IMR-90 (cell line): ENCODE measurements at regions of chr16 and their contacts with region 1.

Region 1: GRCh38 chr16:10918294-10919002 is 23.8 kb downstream of the DEXI start:
- DNase-seq: peak; percentile 92
- ATAC-seq: peak; percentile 98
- H3K4me3 ChIP-seq: no peak overlapping the region
- H3K27ac ChIP-seq: no peak overlapping the region
- H3K4me1 ChIP-seq: peaks cover 5% of the 10 kb centered on the region
- H3K27me3 ChIP-seq: peaks cover 4% of the 10 kb centered on the region; the same call in 1 of the 2 replicates
- CTCF ChIP-seq: peak; percentile 94
- POLR2A ChIP-seq: 0 out of 2 replicates have a peak, but pooled peaks have one; percentile 25
- RAD21 ChIP-seq: peak; percentile 93

Region 2: DNA sequence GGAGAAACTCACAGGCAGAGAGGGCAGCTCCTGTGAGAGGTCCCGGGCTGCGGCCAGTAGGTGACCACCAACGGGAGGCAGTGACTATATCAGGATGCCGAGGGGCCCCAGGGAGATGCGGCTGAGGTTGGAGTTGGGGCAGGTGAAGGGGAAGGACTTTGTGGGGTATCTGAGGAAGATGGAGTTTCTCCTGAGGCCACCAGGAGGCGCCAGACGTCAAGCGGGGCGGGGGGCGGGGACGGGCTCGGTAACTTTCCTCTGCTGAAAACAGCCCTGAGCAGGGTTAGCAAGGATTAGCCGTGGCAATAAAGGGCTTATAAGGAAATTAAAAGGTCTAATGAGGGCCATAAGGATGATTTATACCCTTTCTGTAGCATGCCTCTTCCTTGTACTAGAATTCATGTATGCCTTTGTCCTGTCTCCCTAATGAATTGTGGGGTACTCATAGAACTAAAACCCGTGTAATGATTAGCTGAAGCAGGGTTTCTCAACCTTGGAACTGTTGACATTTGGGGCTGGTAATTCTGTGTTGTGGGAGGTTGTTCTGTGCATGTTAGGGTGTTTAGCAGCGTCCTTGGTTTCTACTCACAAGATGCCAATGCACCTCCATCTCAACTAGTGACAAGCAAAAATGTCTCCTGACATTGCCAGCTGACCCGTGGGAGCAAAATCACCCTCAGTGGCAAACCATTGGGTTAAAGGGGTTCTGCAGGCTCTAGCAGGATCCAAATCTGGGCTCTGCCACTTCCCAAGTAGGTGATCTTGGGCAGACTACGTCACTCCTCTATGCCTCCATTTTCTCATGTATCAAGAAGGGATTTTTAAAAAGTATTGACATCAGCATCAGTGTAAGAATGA is 661.4 kb before region 1 on chr16:
- CTCF ChIA-PET with region 1: no interaction called
- POLR2A ChIA-PET with region 1: no interaction called
- dilution Hi-C with region 1: no loop called
- in situ Hi-C with region 1: loop called (anchors 25 kb)
- intact Hi-C with region 1: no loop called
- DNase-seq: no peak
- ATAC-seq: peak; percentile 59
- H3K4me3 ChIP-seq: no peak overlapping the region
- H3K27ac ChIP-seq: no peak overlapping the region
- H3K4me1 ChIP-seq: no peaks in the 10 kb centered on the region
- H3K27me3 ChIP-seq: no peaks in the 10 kb centered on the region
- CTCF ChIP-seq: peak; percentile 63
- POLR2A ChIP-seq: no peak
- RAD21 ChIP-seq: peak; percentile 55

Region 3: DNA sequence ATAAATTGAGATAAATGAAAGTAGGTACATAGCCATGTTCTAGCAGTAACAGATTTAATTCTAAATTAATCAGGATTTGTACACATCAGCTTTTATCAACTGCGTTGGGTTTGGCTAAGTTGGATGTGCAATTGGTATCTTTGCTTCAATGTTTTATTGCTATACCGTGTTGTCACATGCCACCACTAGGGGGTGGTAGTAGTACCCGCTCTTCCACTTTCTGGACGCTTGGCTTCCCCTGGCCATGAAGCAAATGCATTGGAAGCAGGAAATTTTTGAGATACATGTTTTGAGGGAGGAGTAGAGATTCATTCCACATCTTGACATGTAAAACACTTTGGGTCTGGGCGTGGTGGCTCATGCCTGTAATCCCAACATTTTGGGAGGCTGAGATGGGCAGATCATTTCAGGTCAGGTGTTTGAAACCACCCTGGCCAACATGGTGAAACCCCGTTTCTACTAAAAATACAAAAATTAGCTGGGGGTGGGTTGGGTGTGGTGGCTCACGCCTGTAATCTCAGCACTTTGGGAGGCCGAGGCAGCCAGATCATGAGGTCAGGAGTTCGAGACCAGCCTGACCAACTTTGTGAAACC is 396.7 kb before region 1 on chr16:
- CTCF ChIA-PET with region 1: interaction called, 4 read pairs
- POLR2A ChIA-PET with region 1: no interaction called
- dilution Hi-C with region 1: no loop called
- in situ Hi-C with region 1: loop called (anchors 10 kb)
- intact Hi-C with region 1: loop called (anchors 1 kb)
- DNase-seq: peak; percentile 68
- ATAC-seq: peak; percentile 98
- H3K4me3 ChIP-seq: no peak overlapping the region
- H3K27ac ChIP-seq: no peak overlapping the region
- H3K4me1 ChIP-seq: no peaks in the 10 kb centered on the region
- H3K27me3 ChIP-seq: no peaks in the 10 kb centered on the region
- CTCF ChIP-seq: peak; percentile 88
- POLR2A ChIP-seq: no peak
- RAD21 ChIP-seq: peak; percentile 81

Region 4: DNA sequence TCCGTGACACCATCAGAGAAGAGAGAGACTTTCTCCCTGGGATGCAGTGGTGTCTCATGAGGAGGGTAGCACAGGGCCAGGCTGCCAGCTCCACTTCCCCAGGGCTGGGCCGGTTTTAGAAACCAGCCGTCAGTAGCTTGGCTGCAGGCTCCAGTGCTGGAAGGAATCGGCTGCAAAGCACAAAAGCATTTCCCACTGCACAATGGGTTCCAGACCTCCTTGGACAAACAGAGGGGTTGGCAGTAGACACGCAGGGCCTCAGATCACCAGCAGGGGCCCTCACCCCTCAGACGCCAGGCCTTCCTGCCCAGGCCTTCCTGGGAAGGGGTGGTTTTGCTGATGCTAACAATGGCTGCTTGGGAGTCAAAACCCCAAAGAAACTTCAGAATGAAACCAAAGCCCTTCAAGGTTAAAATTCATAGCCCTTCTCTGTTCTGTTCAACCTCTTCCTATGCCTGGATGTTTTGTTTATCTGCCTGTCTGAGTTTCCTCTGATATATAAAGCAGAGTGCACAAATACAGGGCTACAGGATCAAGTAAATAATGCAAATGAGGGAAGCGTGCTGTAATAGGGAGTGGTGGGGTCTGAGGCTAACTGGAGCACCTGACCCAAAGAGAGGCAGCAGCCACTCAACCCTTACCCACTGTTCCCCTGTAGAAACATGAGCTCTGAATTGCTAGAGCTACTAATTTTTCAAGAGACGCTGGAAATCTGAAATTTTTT is 250.0 kb before region 1 on chr16:
- CTCF ChIA-PET with region 1: no interaction called
- POLR2A ChIA-PET with region 1: no interaction called
- dilution Hi-C with region 1: no loop called
- in situ Hi-C with region 1: no loop called
- intact Hi-C with region 1: no loop called
- DNase-seq: peak; percentile 10
- ATAC-seq: peak; percentile 59
- H3K4me3 ChIP-seq: no peak overlapping the region
- H3K27ac ChIP-seq: no peak overlapping the region
- H3K4me1 ChIP-seq: no peaks in the 10 kb centered on the region
- H3K27me3 ChIP-seq: peaks cover 4% of the 10 kb centered on the region; the same call in 1 of the 2 replicates
- CTCF ChIP-seq: peak; percentile 35
- POLR2A ChIP-seq: no peak
- RAD21 ChIP-seq: no peak

Region 5: GRCh38 chr16:10737068-10737625 is 181.3 kb before region 1 on chr16:
- CTCF ChIA-PET with region 1: interaction called, 7 read pairs
- POLR2A ChIA-PET with region 1: no interaction called
- dilution Hi-C with region 1: no loop called
- in situ Hi-C with region 1: no loop called
- intact Hi-C with region 1: loop called (anchors 2 kb)
- DNase-seq: peak; percentile 61
- ATAC-seq: peak; percentile 89
- H3K4me3 ChIP-seq: no peak overlapping the region
- H3K27ac ChIP-seq: no peak overlapping the region
- H3K4me1 ChIP-seq: peaks cover 2% of the 10 kb centered on the region; the same call in 1 of the 2 replicates
- H3K27me3 ChIP-seq: no peaks in the 10 kb centered on the region
- CTCF ChIP-seq: peak; percentile 96
- POLR2A ChIP-seq: 0 out of 2 replicates have a peak, but pooled peaks have one; percentile 26
- RAD21 ChIP-seq: peak; percentile 96

Region 6: DNA sequence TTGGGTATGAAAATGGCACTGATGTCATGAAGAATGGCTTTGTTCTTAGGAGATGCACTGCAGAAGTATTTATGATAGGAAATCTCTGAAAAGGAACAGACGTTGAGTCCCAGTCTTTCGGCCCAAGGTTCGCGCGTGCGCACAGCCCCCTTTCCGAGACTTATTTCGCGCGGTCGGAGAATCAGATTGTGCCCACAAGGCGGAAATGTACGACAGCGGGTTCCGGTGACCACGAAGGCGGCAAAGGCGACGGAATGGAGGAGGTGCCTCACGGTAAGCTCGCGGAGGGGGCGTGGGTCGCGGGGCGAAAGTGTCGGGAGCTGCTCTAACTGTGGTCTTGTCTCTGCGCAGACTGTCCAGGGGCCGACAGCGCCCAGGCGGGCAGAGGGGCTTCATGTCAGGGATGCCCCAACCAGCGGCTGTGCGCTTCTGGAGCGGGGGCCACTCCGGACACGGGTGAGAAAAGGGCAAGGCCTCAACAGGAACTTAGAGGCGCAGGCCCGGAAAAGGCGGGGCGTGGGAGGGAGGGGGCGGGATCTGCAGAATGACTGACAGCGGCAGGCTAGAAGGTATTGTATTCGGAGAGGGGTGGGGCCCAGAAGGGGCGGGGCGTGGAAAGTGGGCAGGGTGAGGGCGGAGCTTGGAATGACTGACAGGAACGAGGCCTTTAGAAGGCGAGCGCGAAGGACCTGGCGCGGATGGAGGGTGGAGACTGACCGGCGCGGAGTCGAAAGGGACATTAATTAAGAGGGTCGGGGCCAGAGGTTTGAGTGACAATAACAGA is 174.6 kb before region 1 on chr16 and contains the start of gene NUBP1:
- CTCF ChIA-PET with region 1: interaction called, 7 read pairs
- POLR2A ChIA-PET with region 1: no interaction called
- dilution Hi-C with region 1: no loop called
- in situ Hi-C with region 1: no loop called
- intact Hi-C with region 1: loop called (anchors 2 kb)
- DNase-seq: peak; percentile 97
- ATAC-seq: peak; percentile 97
- H3K4me3 ChIP-seq: peak within 1 kb of the TSS; percentile 80
- H3K27ac ChIP-seq: peak within 1 kb of the TSS; percentile 98
- H3K4me1 ChIP-seq: peaks cover 2% of the 10 kb centered on the region; the same call in 1 of the 2 replicates
- H3K27me3 ChIP-seq: no peaks in the 10 kb centered on the region
- CTCF ChIP-seq: no peak
- POLR2A ChIP-seq: peak; percentile 96
- RAD21 ChIP-seq: no peak
- total RNA-seq, gene NUBP1: 28.0 and 29.7 TPM in 2 replicates

Region 7: DNA sequence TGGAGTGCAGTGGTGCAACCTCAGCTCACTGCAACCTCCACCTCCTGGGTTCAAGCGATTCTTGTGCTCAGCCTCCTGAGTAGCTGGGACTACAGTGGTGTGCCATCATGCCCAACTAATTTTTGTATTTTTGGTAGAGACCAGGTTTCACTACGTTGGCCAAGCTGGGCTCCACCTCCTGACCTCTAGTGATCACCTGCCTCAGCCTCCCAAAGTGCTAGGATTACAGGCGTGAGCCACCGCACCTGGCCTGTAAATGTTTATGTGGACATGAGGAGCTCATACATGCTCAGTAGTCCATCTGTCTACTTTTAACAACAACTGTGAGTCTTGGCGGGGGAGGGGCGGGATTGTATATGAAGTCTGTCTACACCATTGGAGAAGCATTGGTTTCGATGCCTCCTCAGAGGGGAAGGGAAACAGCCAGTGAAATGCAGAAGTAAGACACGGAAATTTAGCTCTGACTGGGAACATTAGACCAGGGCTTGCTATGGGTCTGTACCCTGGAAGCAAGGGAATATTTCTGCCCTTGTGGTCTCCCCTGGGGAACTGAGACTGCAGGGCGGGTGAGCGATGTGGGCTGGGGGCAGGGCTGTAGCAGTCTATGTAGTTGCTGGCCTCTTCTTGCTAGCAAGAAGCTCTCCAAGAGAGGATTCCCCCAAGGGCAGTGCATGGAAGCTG is 165.5 kb before region 1 on chr16:
- CTCF ChIA-PET with region 1: interaction called, 4 read pairs
- POLR2A ChIA-PET with region 1: no interaction called
- dilution Hi-C with region 1: no loop called
- in situ Hi-C with region 1: loop called (anchors 5 kb)
- intact Hi-C with region 1: loop called (anchors 5 kb)
- DNase-seq: no peak
- ATAC-seq: no peak
- H3K4me3 ChIP-seq: no peak overlapping the region
- H3K27ac ChIP-seq: no peak overlapping the region
- H3K4me1 ChIP-seq: peaks cover 11% of the 10 kb centered on the region
- H3K27me3 ChIP-seq: no peaks in the 10 kb centered on the region
- CTCF ChIP-seq: no peak
- POLR2A ChIP-seq: no peak
- RAD21 ChIP-seq: no peak

Region 8: GRCh38 chr16:10981697-10982216 is 63.3 kb after region 1 on chr16:
- CTCF ChIA-PET with region 1: no interaction called
- POLR2A ChIA-PET with region 1: no interaction called
- dilution Hi-C with region 1: no loop called
- in situ Hi-C with region 1: no loop called
- intact Hi-C with region 1: no loop called
- DNase-seq: no peak
- ATAC-seq: no peak; the same call in 1 of the 2 replicates
- H3K4me3 ChIP-seq: no peak overlapping the region
- H3K27ac ChIP-seq: no peak overlapping the region
- H3K4me1 ChIP-seq: peaks cover 17% of the 10 kb centered on the region
- H3K27me3 ChIP-seq: no peaks in the 10 kb centered on the region
- CTCF ChIP-seq: peak; percentile 24; the same call in 1 of the 2 replicates
- POLR2A ChIP-seq: no peak
- RAD21 ChIP-seq: no peak; the same call in 1 of the 2 replicates